Uterus (tissue), 4 donors: ENCODE measurements at regions of chr19 and their contacts with region 1.

Region 1: GRCh38 chr19:42290523-42291438 is 11.2 kb upstream of the PRR19 start:
- DNase-seq: peak in 1 of 2 donors; percentile 28
- H3K4me3 ChIP-seq: no peak overlapping the region
- H3K27ac ChIP-seq: no peak overlapping the region
- H3K4me1 ChIP-seq: peaks cover 0 to 11% of the 10 kb centered on the region in 2 donors
- H3K27me3 ChIP-seq: no peaks in the 10 kb centered on the region
- CTCF ChIP-seq: peak in 2 of 4 experiments; percentile 32
- POLR2A ChIP-seq: no peak

Region 2: DNA sequence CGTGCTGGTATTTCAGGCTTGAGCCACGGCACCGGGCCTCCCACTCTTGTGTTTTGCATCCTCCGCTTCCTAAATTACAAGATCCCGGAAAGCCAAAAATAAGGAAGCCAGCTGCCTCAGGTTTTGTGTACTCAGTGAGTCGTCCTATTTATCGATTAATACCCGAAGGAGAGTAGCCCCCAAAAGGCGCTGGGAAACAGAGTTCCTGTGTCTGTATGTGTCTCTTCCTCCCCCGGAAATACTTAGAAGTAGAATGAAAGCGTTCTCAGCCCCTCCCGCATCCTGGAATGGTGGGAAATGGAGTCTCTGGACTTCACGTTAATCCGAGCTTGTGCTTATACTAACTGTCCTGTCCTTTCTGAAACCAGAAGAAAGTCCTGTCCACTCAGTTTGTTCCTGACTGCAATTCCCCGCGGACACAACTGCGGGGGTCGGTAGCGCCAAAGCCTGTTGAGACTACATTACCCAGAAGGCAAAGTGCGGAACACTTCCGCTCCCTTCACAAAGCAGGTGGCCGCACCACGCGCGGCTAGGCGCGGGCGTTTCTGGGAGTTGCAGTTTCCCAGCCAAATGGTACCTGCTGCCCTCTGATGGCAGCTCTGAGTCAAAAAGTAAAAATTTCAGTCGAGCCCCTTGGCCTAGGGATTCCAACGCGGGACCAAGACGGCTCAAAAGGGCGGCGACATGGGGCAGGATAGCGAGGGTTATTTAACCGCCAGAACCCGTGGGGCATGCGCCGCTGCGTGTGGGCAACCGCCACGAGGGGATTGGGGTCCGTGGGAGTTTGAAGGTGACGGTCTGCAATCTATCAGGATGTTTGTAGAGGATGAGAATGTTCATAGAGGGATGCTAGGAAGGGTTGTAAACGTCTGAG is 46.2 kb before region 1 on chr19:
- intact Hi-C with region 1: loop called (anchors 5 kb)
- DNase-seq: peak; percentile 91
- H3K4me3 ChIP-seq: peak overlapping the region; percentile 58 to 81
- H3K27ac ChIP-seq: peak overlapping the region; percentile 88 to 95
- H3K4me1 ChIP-seq: peaks cover 4 to 17% of the 10 kb centered on the region in 2 donors
- H3K27me3 ChIP-seq: no peaks in the 10 kb centered on the region
- CTCF ChIP-seq: peak; percentile 69 to 84 (median 78)
- POLR2A ChIP-seq: peak in 1 of 2 donors; percentile 41

Region 3: DNA sequence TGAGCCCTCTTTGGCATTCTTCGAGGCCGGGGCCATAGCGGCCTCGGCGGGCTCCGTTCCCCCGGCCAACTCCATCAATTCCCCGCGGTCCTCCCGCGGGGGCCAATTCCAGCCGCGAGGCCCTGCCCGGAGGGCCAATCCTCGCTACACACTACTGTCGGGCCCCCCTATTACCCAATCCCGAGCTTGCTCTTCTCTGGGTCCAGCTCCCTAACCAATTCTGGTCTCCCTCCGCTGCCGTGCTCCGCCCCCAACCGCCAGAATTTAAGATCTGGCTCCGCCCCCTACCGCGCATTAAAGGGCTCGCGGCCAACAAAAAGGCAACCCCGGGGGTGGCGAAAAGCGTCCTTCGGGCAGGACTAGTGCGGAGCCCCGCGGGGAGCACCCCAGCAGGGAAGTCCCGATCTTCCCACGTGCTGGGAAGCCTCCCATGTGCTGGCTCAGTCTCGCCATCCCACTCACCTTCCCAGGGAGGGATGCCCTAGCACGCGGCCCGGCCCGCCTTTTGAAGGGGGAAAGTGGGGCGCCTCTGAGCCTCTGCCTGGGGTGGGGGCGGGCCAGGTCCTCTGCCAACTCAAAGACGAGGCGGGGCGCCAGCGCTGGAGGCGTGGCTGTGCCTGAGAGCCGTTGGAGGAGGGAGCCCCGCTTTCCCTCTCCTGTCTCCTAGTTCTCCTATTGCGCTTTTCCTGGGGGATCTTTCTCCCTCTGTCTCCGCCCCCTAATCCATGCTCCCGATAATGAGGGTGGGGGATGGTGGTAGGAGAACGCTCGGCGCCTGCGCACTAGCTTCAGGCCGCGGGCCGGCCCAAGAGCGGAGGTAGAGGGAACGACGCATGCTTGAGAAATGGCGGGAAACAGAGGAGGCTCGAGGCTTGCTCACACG is 132.9 kb after region 1 on chr19:
- intact Hi-C with region 1: no loop called
- DNase-seq: peak; percentile 69 to 84
- H3K4me3 ChIP-seq: peak overlapping the region; percentile 37 to 51
- H3K27ac ChIP-seq: peak overlapping the region; percentile 45 to 60
- H3K4me1 ChIP-seq: peaks cover 0 to 6% of the 10 kb centered on the region in 2 donors
- H3K27me3 ChIP-seq: no peaks in the 10 kb centered on the region
- CTCF ChIP-seq: no peak
- POLR2A ChIP-seq: peak; percentile 46 to 61